Calu3 (cell line): ENCODE measurements at regions of chr16 and their contacts with region 1.

Region 1: GRCh38 chr16:30163538-30163937 is 19.9 kb upstream of the CORO1A start:
- DNase-seq: no peak
- H3K4me3 Mint-ChIP-seq: no peak overlapping the region
- H3K27ac Mint-ChIP-seq: no peak overlapping the region
- H3K4me1 Mint-ChIP-seq: no peaks in the 10 kb centered on the region
- H3K27me3 Mint-ChIP-seq: no peaks in the 10 kb centered on the region
- CTCF ChIP-seq: no peak

Region 2: GRCh38 chr16:30032083-30032819 is 131.3 kb before region 1 on chr16:
- CTCF ChIA-PET with region 1: no interaction called
- intact Hi-C with region 1: no loop called
- DNase-seq: peak; percentile 74
- H3K4me3 Mint-ChIP-seq: peak overlapping the region; percentile 18
- H3K27ac Mint-ChIP-seq: no peak overlapping the region
- H3K4me1 Mint-ChIP-seq: peaks cover 9% of the 10 kb centered on the region
- H3K27me3 Mint-ChIP-seq: peaks cover 86% of the 10 kb centered on the region
- CTCF ChIP-seq: peak; percentile 93

Region 3: GRCh38 chr16:30075507-30076275 is 87.8 kb before region 1 on chr16 and contains the start of gene PPP4C:
- CTCF ChIA-PET with region 1: no interaction called
- intact Hi-C with region 1: no loop called
- DNase-seq: peak; percentile 95
- H3K4me3 Mint-ChIP-seq: peak within 1 kb of the TSS; percentile 87
- H3K27ac Mint-ChIP-seq: peak within 1 kb of the TSS; percentile 88
- H3K4me1 Mint-ChIP-seq: peaks cover 23% of the 10 kb centered on the region
- H3K27me3 Mint-ChIP-seq: no peaks in the 10 kb centered on the region
- CTCF ChIP-seq: no peak
- total RNA-seq, gene PPP4C: 184 and 187 TPM in 2 replicates

Region 4: DNA sequence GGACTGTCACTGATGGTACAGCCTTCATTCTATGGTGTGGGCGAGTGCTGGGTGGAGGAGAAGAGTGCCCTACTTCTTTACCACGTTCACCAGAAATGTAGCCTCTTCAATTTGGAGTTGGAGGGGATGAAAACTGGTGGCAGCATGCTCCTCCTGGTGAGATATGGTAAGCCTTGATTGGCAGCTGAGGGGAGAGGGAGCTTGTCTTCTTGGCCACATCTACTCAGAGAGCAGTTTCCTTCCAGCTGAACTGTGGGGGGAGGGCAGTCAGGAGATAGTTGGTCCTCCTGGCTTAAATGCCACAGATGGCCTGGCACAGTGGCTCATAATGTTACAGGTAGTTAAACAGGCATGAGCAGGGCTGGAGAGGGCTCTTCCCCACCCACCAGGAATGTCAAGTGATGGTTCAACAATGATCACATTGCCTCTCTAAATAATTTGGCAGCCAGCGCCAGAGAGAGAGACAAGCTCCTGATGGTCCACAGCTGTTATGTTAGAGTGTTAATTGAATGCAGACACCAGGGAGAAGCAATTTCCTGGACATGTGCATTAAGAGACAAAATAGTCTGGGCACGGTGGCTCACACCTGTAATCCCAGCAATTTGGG is 31.6 kb before region 1 on chr16:
- CTCF ChIA-PET with region 1: no interaction called
- intact Hi-C with region 1: no loop called
- DNase-seq: no peak
- H3K4me3 Mint-ChIP-seq: no peak overlapping the region
- H3K27ac Mint-ChIP-seq: no peak overlapping the region
- H3K4me1 Mint-ChIP-seq: no peaks in the 10 kb centered on the region
- H3K27me3 Mint-ChIP-seq: no peaks in the 10 kb centered on the region
- CTCF ChIP-seq: no peak

Region 5: DNA sequence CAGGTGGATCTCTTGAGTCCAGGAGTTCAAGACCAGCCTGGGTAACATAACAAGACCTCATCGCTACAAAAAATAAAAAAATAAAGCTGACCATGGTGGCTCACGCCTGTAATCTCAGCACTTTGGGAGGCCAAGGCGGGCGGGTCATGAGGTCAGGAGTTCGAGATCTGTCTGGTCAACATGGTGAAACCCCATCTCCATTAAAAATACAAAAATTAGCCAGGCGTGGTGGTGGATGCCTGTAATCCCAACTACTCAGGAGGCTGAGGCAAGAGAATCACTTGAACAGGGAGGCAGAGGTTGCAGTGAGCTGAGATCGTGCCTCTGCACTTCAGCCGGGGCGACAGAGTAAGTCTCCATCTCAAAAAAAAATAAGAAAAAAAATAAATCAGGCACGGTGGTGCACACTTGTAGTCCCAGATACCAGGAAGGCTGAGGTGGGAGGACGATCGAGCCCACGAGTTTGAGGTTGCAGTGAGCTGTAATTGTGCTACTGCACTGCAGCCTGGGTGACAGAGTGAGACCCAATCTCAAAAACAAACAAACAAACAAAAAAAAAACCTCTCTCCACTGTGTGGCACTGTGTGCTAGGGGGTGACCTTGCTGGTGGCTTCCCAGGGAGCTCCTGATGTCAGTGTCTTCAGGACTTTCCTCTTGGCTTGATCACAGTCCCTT is 20.7 kb before region 1 on chr16:
- CTCF ChIA-PET with region 1: interaction called, 11 read pairs
- intact Hi-C with region 1: no loop called
- DNase-seq: peak; percentile 22
- H3K4me3 Mint-ChIP-seq: no peak overlapping the region
- H3K27ac Mint-ChIP-seq: no peak overlapping the region
- H3K4me1 Mint-ChIP-seq: peaks cover 8% of the 10 kb centered on the region
- H3K27me3 Mint-ChIP-seq: no peaks in the 10 kb centered on the region
- CTCF ChIP-seq: no peak

Region 6: GRCh38 chr16:30179195-30179594 is 15.7 kb after region 1 on chr16:
- CTCF ChIA-PET with region 1: interaction called, 10 read pairs
- intact Hi-C with region 1: no loop called
- DNase-seq: no peak
- H3K4me3 Mint-ChIP-seq: no peak overlapping the region
- H3K27ac Mint-ChIP-seq: no peak overlapping the region
- H3K4me1 Mint-ChIP-seq: peaks cover 4% of the 10 kb centered on the region
- H3K27me3 Mint-ChIP-seq: no peaks in the 10 kb centered on the region
- CTCF ChIP-seq: no peak